Cardiac septum (tissue), 1 donor: ENCODE measurements at regions of chr12 and their contacts with region 1.

Region 1: GRCh38 chr12:53561590-53561953 is 54.3 kb upstream of the NPFF start:
- DNase-seq: no peak

Region 2: DNA sequence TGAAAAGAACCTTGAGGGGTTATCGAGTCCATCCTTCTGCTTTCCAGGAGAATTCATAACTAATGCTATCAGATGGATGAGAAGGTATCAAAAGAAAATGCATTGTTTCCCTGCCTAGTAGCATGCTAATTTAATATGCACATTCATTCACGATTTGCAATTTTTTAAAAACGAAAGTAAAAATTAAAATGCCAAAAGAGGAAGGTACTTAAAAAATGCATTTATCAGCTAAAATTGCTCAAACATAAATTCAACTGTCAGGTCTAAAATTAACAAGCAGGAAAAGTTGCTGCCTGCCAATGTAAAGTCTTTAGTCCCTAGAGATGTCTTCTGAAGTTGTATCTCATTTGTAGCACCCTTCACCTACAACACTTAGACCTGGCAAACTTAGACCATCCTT is 56.7 kb after region 1 on chr12:
- intact Hi-C with region 1: loop called (anchors 10 kb)
- DNase-seq: no peak

Region 3: DNA sequence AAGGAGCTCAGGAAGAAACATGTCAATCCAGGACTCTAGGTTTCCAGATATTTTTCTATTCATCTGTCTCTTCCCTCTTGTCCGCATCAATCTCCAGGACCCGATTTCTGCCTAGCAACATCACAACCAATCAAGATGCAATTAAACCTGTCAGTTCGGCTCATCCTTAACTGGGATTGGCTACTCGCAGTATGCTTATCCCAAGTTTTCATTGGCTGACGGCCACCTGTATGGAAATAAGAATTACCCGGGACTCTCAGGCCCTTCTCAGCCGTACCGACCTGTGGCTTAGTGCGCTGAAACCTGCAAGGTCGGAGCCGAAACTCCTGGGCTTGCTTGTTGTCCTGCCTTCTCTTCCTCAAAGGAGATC is 134.7 kb after region 1 on chr12:
- intact Hi-C with region 1: no loop called
- DNase-seq: no peak